Heart right ventricle (tissue), 16 donors: ENCODE measurements at regions of chr2 and their contacts with region 1.

Region 1: GRCh38 chr2:96868555-96869280 is 1.2 kb downstream of the SEMA4C start:
- DNase-seq: peak; percentile 90 to 93
- ATAC-seq: peak; percentile 70 to 80 (median 75)
- H3K4me3 ChIP-seq: peak overlapping the region; percentile 72 to 100 (median 98)
- H3K27ac ChIP-seq: peak overlapping the region; percentile 87 to 100 (median 100)
- H3K4me1 ChIP-seq: peaks cover 16 to 82% (median 72%) of the 10 kb centered on the region in 9 donors
- H3K27me3 ChIP-seq: peaks cover 0 to 56% (median 0%) of the 10 kb centered on the region in 7 donors
- CTCF ChIP-seq: peak; percentile 44 to 77 (median 69)

Region 2: GRCh38 chr2:96527286-96528005 is 341.3 kb before region 1 on chr2:
- intact Hi-C with region 1: no loop called
- DNase-seq: peak; percentile 59 to 60
- ATAC-seq: peak in 5 of 8 donors; percentile 15 to 25 (median 19)
- H3K4me3 ChIP-seq: peak overlapping the region; percentile 41 to 63 (median 58)
- H3K27ac ChIP-seq: peak overlapping the region; percentile 46 to 100 (median 94)
- H3K4me1 ChIP-seq: peaks cover 25 to 73% (median 52%) of the 10 kb centered on the region in 9 donors
- H3K27me3 ChIP-seq: no peaks in the 10 kb centered on the region
- CTCF ChIP-seq: peak in 7 of 9 donors; percentile 29 to 64 (median 51)

Region 3: DNA sequence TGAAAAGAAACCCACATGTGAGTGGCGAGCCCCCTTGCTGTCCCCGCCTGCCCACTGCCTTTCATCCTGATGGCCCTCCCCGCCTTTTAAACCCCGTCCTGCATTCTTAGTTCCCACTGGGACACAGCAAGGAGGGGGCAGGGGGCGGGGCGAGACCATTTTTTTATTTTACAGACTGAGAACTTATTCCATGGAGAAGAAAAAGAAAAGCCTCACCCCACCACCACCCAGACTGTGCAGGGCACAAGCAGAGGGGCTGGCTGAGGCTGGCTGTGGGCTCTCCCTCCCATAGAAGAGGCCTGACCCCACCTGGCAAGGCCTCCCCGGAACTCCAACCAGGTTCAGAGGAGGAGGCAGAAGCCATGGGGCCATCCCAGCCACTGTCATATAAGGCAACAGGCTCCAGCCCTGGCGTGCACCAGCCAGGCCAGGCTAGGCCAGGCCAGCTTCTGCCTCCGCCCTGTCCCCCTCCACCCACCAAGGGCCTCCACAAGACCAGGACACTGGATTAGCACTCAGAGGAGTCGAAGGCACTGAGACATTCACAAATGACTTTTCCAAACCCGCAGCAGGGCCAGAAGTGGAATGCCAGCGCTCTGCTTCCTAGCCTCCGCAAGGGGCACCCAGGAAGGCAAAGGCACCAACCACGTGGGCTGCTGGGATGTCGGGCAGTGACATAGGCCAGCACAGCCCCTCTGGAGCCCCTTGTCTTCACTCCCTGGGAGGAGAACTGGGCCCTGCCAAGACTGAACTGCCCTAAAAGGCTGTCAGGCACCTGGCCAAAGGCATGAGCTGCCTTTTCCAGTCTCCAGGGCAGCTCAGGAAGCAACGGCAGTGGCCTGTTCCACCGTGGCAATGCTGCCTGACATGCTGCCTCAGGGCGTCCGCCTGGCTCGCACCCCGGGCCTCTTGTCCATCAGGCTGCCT is 38.7 kb after region 1 on chr2:
- intact Hi-C with region 1: loop called in 8 of 10 experiments (anchors 1 to 5 kb)
- DNase-seq: peak; percentile 85 to 90
- ATAC-seq: peak; percentile 91 to 97 (median 93)
- H3K4me3 ChIP-seq: peak overlapping the region in 9 of 10 donors; percentile 14 to 37 (median 28)
- H3K27ac ChIP-seq: peak overlapping the region; percentile 81 to 98 (median 94)
- H3K4me1 ChIP-seq: peaks cover 28 to 55% (median 51%) of the 10 kb centered on the region in 9 donors
- H3K27me3 ChIP-seq: no peaks in the 10 kb centered on the region
- CTCF ChIP-seq: peak in 3 of 9 donors; percentile 9 to 31 (median 24)